Activated B cell treated with CpG ODN at 0.5 μM for 24 hours (primary cell): ENCODE measurements at regions of chr1 and their contacts with region 1.

Region 1: DNA sequence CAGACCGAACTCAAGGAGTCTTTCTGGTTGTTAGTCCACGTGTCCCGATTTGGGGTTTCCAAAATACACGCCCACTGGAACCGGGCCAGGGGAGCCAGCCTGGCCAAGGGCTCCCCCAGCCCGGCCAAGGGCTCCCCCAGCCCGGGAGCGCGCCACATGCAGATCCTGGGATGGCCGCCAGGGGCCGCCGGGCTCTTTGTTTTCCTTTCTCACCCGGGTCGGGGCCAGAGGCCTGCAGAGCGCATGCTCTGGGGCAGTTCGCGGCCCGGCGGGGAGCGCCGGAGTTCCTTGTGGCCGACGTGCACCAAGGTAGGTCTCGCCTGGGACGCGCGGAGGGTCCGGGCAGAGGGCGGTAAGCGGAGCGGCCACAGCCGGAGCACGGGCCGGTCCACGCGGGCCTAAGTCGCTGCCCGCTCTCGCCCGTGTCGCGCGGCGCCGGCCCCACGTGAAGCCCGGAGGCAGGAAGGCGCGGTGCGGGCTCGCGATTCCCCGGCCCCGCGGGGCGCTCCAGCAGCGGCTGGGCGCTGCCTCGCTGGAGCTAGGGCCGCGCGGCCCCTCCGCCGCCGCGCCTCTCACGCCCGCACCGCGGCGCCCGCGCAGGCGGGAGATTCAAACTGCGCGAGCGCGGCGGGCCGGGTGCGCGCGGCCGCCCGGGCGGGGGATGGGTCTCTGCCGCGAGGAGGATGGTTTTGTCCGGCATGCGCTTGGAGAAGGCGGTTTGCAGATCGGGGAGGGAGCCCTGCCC is 12.3 kb downstream of the RCC1 start:
- DNase-seq: peak; percentile 89
- ATAC-seq: peak; percentile 88
- H3K4me3 Mint-ChIP-seq: peak overlapping the region; percentile 90
- H3K27ac Mint-ChIP-seq: peak overlapping the region; percentile 73
- H3K4me1 Mint-ChIP-seq: peaks cover 28% of the 10 kb centered on the region
- H3K27me3 Mint-ChIP-seq: no peaks in the 10 kb centered on the region
- CTCF ChIP-seq: no peak

Region 2: DNA sequence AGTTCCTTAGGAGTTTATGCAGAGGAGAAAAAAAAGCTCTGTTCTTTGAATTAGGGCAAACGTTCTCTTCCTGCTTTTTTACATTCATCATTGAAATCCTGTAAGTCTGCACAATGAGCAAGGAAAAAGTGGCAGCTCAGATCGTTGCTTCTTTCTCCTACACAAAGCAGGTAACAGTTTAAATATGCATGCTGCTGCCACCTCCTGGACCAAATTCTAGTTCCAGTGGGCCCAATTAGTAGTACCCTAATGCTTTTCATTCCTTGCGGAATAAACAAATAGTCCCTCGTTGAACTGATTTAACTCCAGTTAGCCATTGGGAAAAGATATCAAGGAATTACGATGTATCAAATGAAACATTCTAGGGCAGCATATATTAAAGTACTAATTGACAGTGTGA is 238.7 kb after region 1 on chr1:
- CTCF ChIA-PET with region 1: no interaction called
- POLR2A ChIA-PET with region 1: no interaction called
- intact Hi-C with region 1: loop called (anchors 5 kb)
- DNase-seq: no peak
- ATAC-seq: no peak
- H3K4me3 Mint-ChIP-seq: no peak overlapping the region
- H3K27ac Mint-ChIP-seq: no peak overlapping the region
- H3K4me1 Mint-ChIP-seq: peaks cover 19% of the 10 kb centered on the region
- H3K27me3 Mint-ChIP-seq: no peaks in the 10 kb centered on the region
- CTCF ChIP-seq: no peak

Region 3: GRCh38 chr1:28789412-28789811 is 271.2 kb after region 1 on chr1:
- CTCF ChIA-PET with region 1: no interaction called
- POLR2A ChIA-PET with region 1: no interaction called
- intact Hi-C with region 1: loop called (anchors 5 kb)
- DNase-seq: no peak
- ATAC-seq: no peak
- H3K4me3 Mint-ChIP-seq: no peak overlapping the region
- H3K27ac Mint-ChIP-seq: no peak overlapping the region
- H3K4me1 Mint-ChIP-seq: peaks cover 6% of the 10 kb centered on the region
- H3K27me3 Mint-ChIP-seq: peaks cover 5% of the 10 kb centered on the region
- CTCF ChIP-seq: no peak